ENCODE measurements at regions of chr7 and their contacts with region 1.

Region 1: GRCh38 chr7:1537535-1538412 is 7.3 kb downstream of the MAFK start:
- DNase-seq: no peak
- ATAC-seq: peak; percentile 5
- H3K4me3 ChIP-seq: peak overlapping the region; percentile 52 to 70
- H3K27ac ChIP-seq: peak overlapping the region; percentile 88
- H3K4me1 ChIP-seq: peaks cover 74% of the 10 kb centered on the region
- H3K27me3 ChIP-seq: no peaks in the 10 kb centered on the region
- CTCF ChIP-seq: no peak

Region 2: DNA sequence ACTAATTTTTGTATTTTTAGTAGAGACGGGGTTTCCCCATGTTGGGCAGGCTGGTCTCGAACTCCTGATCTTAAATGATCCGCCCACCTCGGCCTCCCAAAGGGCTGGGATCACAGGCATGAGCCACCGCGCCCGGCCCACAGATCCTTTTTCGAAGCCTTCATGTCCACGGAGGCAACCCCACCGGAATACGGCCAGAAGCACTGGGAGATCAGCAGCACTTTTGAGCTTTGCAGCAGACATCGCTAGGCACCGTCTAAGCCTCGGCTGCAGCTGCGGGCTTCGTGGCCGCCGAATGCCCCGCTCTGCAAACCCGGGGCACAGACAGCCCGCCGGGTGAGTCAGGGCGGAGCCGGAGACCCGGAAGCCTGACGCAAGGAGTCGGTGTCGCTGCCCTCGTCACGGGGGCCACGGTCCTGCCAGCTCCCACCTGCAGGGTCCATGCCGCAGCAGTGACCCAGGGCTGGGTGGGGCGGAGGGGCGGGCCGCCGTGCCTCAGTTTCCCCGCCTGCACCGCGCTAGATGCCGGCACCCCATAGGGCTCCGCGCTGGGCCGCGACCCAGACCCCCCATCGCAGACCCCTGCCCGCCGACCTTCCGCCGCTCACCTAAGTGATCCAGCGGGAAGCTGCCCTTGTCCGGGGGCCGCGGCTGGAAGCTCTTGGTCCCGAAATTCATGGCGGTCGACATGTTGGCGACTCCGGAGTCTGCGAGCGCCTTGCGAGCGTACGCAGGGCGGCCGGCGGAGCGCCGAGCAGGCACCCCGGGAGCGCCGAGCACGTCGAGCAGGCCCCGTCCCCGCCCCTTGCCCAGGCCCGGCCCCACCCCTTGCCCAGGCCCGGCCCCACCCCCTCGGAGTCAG is 562.7 kb before region 1 on chr7 and contains the start of gene COX19:
- CTCF ChIA-PET with region 1: no interaction called
- POLR2A ChIA-PET with region 1: no interaction called
- in situ Hi-C with region 1: no loop called
- intact Hi-C with region 1: no loop called
- DNase-seq: peak; percentile 36
- ATAC-seq: peak; percentile 95
- H3K4me3 ChIP-seq: peak within 1 kb of the TSS; percentile 86 to 95
- H3K27ac ChIP-seq: peak within 1 kb of the TSS; percentile 76
- H3K4me1 ChIP-seq: peaks cover 16% of the 10 kb centered on the region
- H3K27me3 ChIP-seq: no peaks in the 10 kb centered on the region
- CTCF ChIP-seq: no peak
- total RNA-seq, gene COX19: 14.4 TPM

Region 3: DNA sequence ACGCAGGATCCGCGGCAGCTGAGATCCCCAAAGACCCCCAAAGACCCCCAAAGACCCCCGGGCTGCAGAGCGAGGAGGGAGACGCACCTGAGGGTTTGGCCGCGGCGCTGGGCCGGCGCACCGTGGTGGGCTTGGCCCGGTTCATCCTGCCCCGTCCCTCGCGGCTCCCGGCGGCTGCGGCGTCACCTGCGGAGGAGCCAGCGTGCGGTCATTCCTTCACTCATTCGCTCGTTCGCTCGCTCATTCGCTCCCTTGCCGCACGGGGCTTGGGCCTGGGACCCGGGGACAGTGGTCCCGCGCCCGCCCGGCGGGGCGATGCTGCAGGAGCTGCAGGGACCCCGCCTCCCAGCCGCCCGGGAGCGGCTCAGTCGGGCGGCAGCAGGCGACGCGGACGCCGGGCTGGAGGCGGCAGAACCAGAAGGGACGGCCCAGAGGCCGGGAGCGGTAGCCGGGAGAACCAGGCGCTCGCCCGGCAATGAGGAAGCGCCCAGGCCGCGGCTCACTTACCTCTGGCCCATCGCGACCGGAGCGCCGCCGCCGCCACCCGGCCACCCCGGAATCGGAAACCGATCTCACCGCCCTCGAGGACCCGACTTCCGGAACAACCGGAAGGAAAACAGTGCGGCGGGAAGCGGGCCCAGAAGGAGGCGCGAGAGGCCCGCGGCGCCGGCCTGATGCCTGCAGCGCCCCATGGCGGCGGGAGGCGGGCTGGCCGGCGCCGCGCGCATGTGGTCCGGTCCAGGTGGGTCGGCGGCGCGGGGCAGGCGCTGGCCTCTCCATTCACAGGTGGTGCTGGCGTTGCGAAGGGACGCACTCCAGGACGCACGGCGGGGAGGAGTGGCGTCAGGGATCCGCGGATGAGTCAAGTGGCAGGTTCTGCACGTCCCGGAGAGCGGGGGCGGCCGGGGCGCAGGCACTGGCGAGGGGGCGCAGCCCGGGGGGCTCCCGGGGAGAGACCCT is 33.7 kb before region 1 on chr7 and contains the start of gene INTS1:
- CTCF ChIA-PET with region 1: interaction called, 5 read pairs
- POLR2A ChIA-PET with region 1: interaction called, 4 read pairs
- in situ Hi-C with region 1: no loop called
- intact Hi-C with region 1: loop called (anchors 2 kb)
- DNase-seq: no peak
- ATAC-seq: peak; percentile 86
- H3K4me3 ChIP-seq: peak within 1 kb of the TSS; percentile 85 to 99
- H3K27ac ChIP-seq: peak within 1 kb of the TSS; percentile 98
- H3K4me1 ChIP-seq: peaks cover 45% of the 10 kb centered on the region
- H3K27me3 ChIP-seq: no peaks in the 10 kb centered on the region
- CTCF ChIP-seq: peak; percentile 99
- total RNA-seq, gene INTS1: 173 TPM

Region 4: DNA sequence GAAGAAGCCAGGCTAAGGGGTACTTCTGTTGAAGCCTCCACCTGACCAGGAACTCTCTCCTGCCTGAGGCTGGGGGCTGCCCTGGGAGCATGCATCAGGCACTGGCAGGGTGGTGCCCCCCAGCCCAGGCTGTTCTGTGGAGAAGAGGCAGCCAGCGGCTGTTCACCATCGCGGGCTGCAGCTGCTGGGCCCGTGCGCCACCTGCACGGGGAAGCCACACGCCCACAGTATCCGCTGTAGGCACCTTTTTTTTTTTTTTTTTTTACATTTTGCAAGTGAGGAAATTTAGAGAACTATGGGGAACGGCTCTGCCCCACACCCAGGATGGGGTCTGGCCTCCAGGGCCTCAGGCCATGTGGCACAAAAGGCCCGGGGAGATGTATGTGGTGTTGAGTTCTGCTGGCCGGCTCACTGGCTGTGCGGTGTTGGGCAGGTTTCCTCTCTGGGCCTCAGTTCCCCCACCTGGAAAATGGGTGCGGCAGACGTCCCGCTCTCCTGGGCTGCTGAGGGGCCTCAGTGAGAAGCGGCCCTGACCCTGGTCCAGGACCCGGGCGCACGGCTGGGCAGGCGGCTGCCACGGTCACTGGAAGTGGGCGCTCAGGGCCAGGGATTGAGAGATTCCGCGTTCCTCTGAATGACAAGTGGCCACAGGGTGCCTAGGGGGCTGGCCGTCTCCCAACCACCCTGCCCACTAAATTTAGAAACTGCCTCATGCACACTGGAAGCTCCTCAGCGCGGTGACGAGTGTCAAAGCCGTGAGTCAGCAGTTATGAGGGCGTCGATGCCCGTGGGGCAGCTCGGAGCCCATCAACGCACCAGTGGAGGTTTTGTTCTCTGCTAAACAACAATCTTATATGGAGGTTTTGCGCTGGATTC is 24.8 kb before region 1 on chr7:
- CTCF ChIA-PET with region 1: interaction called, 3 read pairs
- POLR2A ChIA-PET with region 1: interaction called, 19 read pairs
- in situ Hi-C with region 1: no loop called
- intact Hi-C with region 1: no loop called
- DNase-seq: no peak
- ATAC-seq: peak; percentile 79
- H3K4me3 ChIP-seq: peak overlapping the region in 1 of 2 experiments; percentile 13; a peak in 1 of 4 replicates
- H3K27ac ChIP-seq: peak overlapping the region; percentile 85
- H3K4me1 ChIP-seq: peaks cover 52% of the 10 kb centered on the region
- H3K27me3 ChIP-seq: no peaks in the 10 kb centered on the region
- CTCF ChIP-seq: no peak

Region 5: DNA sequence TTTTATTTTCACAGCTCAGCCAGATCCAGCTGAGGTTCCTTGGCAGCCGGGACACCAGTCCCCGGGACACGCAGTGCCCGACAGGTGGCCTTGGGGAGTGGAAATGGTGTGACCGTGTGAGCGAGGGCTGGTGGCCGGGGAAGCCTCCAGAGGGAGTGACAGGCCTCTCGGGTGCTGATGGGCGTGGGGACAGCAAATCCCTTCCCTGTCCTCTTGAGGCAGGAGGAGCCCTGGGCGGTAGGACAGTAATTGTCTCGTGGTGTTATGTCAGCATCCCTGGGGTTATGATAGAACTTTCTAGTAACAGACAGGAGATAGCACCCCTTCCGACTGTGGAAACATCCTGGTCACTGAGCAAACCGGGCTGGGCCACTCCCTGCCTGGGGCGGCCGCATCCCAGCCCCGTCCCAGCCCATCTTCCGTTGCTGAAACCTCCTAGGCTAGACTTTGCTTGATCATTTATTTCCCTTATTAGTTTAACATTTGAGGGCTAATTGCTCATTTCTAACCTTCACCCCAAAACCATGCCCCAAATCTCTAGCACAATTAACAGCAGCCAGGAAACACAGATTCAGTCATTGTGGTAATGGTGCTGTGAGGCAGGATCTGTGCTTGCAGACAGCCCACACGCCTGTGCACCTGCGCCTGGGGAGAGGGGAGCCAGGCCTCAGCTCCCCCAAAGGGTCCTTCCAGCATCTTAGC is 195.6 kb after region 1 on chr7:
- CTCF ChIA-PET with region 1: no interaction called
- POLR2A ChIA-PET with region 1: no interaction called
- in situ Hi-C with region 1: no loop called
- intact Hi-C with region 1: no loop called
- DNase-seq: no peak
- ATAC-seq: no peak
- H3K4me3 ChIP-seq: no peak overlapping the region
- H3K27ac ChIP-seq: no peak overlapping the region
- H3K4me1 ChIP-seq: no peaks in the 10 kb centered on the region
- H3K27me3 ChIP-seq: no peaks in the 10 kb centered on the region
- CTCF ChIP-seq: no peak

Region 6: GRCh38 chr7:2477447-2478398 is 939.9 kb after region 1 on chr7:
- CTCF ChIA-PET with region 1: no interaction called
- POLR2A ChIA-PET with region 1: no interaction called
- in situ Hi-C with region 1: no loop called
- intact Hi-C with region 1: no loop called
- DNase-seq: no peak
- ATAC-seq: peak; percentile 92
- H3K4me3 ChIP-seq: no peak overlapping the region
- H3K27ac ChIP-seq: peak overlapping the region; percentile 66; the same call in 1 of the 2 replicates
- H3K4me1 ChIP-seq: peaks cover 18% of the 10 kb centered on the region
- H3K27me3 ChIP-seq: no peaks in the 10 kb centered on the region
- CTCF ChIP-seq: peak; percentile 99

Region 7: GRCh38 chr7:3089493-3089892 is 1551.7 kb after region 1 on chr7:
- CTCF ChIA-PET with region 1: no interaction called
- POLR2A ChIA-PET with region 1: no interaction called
- in situ Hi-C with region 1: no loop called
- intact Hi-C with region 1: no loop called
- DNase-seq: no peak
- ATAC-seq: peak; percentile 78
- H3K4me3 ChIP-seq: no peak overlapping the region
- H3K27ac ChIP-seq: no peak overlapping the region
- H3K4me1 ChIP-seq: no peaks in the 10 kb centered on the region
- H3K27me3 ChIP-seq: no peaks in the 10 kb centered on the region
- CTCF ChIP-seq: peak; percentile 86